ENCODE measurements at regions of chr13 and their contacts with region 1.

Region 1: DNA sequence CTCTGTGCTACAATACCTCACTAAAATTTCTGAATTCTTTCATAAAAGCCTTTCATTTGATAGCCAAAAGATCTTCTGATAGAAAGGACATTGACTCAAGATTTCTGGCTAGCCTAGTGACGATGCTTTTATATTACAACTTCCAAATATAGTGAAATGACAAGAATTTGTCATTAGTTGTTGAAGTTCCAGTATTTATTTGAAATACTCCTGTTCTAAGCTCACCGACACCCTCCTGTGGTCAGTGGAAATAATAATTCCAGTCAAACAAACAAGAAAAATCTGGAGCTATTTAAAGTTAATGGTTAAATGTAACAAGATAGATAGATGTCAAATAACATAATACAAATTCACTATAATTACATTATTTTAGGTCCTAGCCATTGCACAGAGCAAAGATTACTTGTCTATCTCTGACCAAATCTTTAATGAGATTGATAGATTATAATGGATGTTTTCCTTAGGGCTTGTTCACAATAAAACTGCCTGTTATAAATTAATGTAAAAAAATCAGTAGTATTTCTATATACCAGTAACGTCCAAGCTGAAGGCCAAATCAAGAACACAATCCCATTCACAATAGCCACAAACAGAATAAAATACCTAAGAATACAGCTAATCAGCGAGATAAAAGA is 195.5 kb downstream of the RGCC start:
- DNase-seq: no peak

Region 2: DNA sequence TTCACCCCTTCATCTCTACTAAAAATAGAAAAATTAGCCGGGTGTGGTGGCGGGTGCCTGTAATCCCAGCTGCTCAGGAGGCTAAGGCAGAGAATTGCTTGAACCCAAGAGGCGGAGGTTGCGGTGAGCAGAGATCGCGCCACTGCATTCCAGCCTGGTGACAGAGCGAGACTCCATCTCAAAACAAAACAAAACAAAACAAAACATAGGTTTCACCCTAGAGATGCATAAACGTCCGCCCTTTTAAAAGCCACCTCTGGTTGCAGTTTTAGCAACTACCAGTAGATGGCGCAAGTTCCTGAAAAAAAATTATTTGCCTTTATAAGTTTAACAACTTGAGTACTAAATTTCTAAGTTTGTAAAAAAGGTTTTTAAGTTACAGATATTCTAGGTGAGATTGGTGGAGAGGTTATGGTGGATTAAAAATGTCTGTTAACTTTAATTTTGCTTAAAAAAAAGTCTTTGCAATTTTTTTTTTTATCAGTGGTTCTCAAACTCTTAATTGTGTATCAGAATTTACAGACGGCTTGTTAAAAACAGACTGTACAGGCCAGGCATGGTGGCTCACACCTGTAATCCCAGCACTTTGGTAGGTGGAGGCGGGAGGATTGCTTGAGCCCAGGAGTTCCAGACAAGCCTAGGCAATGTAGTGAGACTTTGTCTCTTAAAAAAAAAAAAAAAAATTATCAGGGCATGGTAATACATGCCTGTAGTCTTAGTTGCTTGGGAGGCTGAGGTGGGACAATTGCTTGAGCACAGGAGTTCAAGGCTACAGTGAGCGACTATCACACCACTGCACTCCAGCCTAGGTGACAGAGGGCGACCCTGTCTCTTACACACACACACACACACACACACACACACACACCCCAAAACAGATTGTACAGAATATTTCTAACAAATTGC is 299.7 kb before region 1 on chr13:
- intact Hi-C with region 1: loop called in 1 of 2 experiments (anchors 10 kb)
- DNase-seq: peak; percentile 72

Region 3: DNA sequence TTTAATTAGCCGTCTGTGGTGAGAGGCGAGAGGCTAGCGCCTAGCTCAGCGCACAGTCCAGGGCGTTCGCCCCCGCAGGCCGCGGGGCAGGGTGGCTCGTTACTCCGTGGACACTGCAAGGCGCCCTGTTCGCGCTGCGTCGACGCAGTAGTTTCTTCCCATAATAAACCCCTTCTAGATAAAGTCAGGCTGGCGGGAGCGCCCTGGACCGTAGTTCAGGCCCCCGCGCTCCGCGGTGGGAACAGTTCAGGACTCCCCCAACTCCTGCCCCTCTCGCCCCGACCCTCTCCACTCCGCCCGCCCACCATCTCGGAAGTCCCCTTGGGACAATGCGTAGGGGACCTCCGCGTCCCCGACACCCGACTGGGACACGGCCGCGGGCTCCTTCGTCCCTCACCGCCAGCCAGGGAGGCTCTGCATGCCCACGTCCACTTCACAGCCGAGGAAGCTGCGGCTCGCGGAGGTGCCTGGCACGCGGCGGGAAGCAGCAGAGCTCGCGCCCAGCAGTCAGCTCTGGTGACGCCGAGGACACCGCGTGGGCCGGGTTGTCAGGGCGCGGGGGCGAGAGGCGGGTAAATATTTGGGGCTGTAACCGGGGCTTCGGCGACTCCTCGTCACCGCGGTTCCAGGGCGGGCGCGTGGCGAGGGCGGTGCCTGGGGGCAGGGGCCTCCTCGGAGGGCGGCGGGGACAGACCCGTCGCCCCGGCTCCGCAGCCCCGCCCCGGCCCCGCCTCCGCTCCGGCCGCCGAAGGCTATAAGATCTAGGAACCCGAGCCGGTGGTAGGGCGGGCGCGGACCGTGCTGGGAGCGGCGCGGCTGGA is 195.9 kb before region 1 on chr13 and contains the start of gene RGCC:
- intact Hi-C with region 1: no loop called
- DNase-seq: peak; percentile 96
- total RNA-seq, gene RGCC: 29.6 to 68.3 TPM

Region 4: DNA sequence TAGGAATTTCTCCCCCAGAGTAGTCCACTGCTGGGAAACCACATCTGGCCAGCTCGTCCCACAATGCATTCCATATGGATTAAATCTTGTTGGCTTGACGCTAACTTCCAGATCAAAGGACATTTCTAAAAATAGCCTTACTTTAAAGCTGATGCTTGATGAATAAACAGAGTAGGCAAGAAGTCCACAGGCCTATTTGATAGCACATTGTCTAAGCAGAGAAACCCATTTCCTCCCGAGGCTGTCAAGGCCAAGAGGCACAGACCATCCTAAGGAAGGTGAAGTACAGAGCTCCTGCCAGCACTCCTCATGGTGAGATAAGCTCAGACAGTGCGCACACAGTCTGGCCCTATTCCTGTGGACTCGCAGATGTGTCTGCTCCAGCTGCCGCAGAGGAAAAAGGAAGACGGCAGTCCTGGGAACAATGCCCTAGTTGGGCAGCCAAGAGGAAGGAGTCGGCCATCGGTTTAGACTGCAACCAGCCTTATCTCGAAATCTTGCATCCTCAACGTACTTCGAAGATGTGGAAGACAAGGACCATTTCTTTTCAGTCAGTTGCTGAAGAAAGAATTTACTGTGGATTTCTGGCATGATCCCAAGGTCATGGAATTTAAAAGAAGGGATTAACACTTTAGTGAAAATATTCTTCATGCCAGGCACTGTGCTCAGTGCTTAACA is 38.7 kb before region 1 on chr13:
- intact Hi-C with region 1: no loop called
- DNase-seq: peak; percentile 87

Region 5: DNA sequence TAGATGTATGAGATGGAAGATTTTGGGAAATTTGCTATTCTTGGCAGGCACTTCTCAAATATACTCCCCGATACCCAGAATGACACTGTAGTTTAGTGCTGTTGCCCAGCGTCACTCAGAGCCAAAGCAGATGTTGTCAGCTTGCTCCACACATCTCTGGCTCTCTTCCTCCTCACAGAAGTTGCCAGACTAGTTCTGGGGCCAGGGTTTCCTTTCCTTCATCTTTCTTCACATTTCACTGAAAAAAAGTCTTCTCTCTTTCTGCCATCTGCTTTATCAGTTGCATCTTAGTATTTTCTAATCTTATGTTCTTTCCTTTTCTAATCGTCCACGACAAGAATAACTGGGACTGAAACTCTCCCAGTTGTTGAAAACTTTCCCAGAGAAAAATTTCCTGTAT is 55.9 kb after region 1 on chr13:
- intact Hi-C with region 1: no loop called
- DNase-seq: no peak